ENCODE measurements at regions of chr3 and their contacts with region 1.

Region 1: DNA sequence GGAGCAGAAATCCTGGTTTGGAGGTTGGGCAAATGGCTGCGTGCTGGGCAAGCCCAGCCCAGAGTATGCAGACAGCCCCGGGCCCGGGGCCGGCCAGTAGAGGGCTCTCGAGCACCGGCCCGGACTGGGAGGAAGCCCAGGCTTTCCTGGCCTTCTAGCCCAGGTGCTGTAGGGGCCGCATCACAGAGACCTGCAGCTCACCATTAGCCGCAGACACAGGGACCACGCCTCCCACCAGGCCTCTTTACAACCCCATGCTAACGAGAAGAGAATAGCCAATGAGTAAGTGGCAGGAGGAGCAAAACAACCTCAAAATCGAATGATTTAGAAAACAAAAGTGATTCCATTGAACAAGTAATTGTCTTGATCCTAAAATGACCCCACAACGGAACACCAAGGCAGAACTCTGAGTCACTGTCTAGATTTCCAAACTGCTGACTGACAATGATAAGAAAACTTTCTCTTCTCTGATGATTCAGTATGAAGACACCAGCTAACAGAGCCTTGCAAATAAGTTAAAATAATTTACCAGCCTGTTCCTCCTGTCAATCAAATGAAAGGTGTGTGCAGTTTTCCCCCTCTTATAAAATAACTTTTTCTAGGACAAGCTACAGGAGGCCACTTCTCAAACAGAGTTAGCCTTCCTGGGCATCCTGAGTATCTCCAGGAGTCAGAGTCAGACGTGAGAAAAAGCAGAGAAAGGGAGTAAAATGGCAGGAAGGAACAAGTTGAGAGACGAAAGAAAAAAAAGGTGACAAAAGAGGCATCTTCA is 102.2 kb downstream of the DGKG start:
- DNase-seq: peak; percentile 77

Region 2: DNA sequence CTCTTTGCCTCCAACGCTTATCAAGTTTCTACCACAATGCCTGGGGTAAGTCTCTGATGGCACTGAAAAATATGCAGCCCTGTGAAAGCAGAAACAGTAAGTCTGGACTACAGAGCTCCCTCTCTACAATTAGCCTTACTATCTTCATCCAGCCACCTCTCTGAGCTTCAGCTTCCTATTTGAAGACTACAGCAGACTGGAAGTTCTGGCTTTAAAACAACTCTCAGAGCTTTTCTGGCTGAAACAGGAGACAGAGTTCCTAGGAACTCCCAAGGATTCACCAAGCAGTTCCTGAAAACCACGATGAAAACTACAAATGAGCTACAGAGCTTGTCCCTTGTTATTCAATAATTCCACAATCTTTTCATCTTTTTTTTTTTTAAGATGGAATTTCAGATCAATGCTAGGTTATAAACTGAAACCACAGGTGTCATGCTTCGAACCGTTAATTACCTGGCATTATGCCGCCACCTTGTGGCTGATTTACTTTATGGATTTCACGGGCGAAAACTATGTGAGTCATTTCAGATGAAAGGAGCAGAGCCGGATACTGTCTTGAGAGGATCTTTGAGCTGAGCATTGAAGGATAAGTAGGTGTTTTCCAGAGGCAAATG is 280.5 kb after region 1 on chr3:
- intact Hi-C with region 1: loop called (anchors 1 kb)
- DNase-seq: no peak

Measured in cardiac septum (tissue), 1 donor.